PC-3 (cell line): ENCODE measurements at regions of chr2 and their contacts with region 1.

Region 1: DNA sequence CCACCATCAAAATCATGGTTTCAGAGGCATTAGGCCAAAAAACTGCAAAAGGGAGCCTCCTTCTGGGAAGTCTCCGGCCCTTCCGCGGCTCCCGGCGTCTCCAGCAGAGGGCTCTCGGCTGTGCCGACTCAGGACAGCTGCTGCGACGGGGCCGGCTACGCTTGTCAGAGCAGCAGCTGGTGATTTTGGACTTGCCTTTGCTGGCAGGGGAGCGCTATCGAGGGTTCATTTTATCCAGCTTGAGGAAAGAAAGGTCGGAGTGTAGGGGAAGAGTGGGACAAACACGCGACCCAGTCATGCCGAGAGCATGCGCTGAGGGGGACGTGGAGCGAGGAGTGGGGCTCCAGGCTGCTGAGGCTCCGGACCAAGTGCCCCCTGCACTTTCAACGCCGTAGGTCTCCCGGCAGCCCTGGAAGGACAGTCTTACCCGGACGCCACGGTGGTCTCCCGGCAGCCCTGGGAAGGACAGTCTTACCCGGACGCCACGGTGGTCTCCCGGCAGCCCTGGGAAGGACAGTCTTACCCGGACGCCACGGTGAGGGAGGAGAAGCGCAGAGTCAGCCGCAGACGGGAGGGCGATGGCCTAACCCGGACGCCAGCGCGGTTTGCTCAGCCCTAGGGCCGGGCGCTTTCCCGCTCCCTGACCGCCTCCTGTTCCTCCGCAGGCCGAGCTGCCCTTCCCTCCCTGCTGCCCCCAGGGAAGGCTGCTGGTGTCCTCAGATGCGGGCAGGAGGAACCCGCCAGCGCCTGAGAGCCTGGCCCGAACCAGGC is 21.7 kb downstream of the DDX18 start:
- DNase-seq: peak; percentile 35
- ATAC-seq: peak; percentile 64
- H3K4me3 ChIP-seq: no peak overlapping the region
- H3K27ac ChIP-seq: no peak overlapping the region
- H3K4me1 ChIP-seq: no peaks in the 10 kb centered on the region
- H3K27me3 ChIP-seq: no peaks in the 10 kb centered on the region
- CTCF ChIP-seq: peak; percentile 64

Region 2: DNA sequence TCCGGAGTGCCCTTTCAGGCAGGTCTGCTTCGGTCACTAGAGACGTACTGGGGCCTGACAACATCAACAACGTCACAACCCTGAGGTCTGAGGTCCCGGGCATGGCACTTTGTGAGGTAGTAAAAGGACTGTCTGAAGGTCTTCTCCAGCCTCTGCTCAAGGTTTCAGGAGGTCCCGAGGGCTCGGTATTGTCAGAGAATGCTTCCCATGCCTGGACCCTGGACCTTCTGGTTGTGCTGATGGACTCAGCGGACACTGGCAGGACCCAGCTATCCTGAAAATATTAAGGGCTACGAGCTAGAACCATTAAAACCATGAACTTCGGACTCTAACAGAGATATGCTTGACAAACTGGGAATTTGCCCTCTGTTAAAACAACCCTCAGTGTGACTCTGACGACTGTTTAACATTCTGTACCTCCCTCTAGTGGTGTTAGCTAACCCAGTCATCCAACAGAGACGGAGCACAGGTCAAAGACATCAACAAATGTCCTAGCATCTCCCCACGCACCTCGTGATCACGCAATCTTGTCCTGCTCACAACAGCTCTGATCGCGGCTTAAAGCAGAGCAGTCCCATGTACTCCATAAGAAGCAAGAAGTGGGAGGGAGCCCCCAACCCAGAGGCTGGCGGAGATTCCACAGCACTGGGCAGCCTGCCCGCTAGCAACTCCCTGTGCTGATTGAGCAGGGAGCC is 81.2 kb after region 1 on chr2:
- CTCF ChIA-PET with region 1: no interaction called
- POLR2A ChIA-PET with region 1: no interaction called
- intact Hi-C with region 1: loop called (anchors 5 kb)
- DNase-seq: peak; percentile 20
- ATAC-seq: peak; percentile 43; the same call in 1 of the 2 replicates
- H3K4me3 ChIP-seq: no peak overlapping the region
- H3K27ac ChIP-seq: no peak overlapping the region
- H3K4me1 ChIP-seq: no peaks in the 10 kb centered on the region
- H3K27me3 ChIP-seq: no peaks in the 10 kb centered on the region
- CTCF ChIP-seq: peak; percentile 50